Caco-2 (cell line): ENCODE measurements at regions of chr17 and their contacts with region 1.

Region 1: DNA sequence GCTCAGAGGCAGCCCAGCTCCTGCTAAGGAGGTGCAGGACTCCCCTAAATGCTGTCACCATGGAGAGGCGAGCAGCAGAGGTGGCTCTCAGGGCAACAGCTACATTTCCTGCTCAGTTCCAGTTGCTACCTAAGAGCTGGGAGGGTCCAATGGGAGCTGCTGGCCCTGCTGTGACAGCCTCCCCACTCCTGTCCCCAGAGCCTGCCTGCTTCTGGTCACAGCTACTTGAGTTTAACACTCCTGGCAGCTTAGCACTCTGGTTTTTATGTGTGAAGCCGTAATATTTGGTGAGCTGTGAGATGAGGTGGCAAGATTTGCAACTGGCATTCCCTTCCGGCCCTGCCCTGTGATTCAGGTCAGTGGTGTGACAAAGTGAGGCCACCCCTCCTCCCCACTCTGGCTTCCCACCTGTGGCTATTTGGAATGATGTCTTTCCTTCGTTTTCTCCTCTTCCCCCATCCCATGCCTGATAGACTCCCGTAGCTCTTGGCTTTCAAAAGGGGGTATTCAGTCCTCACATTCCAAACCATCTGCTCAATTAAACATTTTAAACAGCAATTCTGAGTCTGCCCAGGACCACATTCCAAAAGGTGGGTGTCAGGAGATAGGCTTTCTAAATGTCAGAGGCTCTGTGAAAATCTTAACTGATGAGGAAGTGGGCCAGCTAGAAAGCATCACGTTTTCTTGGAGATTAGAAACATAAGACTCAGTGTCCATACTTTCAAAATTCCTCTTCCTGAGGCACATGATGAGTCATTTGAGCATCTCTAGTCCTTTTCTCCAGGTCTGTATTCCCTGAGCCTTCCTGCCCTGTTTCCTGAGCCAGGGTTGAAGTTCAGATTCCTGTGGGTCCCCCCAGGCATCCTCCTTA is 42.6 kb upstream of the SKAP1 start:
- DNase-seq: no peak
- H3K4me3 ChIP-seq: no peak overlapping the region
- H3K4me3 Mint-ChIP-seq: no peak overlapping the region
- H3K27ac Mint-ChIP-seq: no peak overlapping the region
- H3K4me1 ChIP-seq: peaks cover 17% of the 10 kb centered on the region
- H3K4me1 Mint-ChIP-seq: peaks cover 4% of the 10 kb centered on the region
- H3K27me3 ChIP-seq: no peaks in the 10 kb centered on the region
- H3K27me3 Mint-ChIP-seq: peaks cover 6% of the 10 kb centered on the region
- CTCF ChIP-seq: no peak

Region 2: DNA sequence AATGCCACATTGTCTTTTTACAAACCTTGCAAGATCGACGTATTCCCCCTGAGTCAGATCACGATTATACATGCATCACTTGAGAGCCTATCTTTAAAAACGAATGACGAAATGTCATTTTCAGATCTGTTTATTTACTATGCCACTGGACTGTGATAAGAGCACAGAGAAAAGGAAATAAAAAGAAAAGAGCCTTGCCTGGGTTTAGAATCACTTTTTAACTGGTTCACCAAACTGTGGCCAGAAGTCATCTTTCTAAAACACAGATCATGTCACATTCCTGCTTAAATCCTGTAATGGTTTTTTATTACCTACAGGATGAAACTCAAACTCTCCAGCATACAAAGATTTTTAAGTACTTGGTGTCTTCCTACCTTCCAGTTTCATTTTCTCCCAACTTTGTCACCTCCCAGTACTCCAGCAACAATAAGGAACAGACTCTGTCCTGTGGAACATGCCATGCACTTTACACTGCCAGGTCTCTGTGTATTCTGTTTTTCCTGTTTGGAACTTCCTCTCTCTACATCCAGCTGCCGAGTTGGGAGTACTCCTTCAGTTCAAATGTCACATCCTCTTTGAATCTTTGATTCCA is 273.6 kb before region 1 on chr17:
- CTCF ChIA-PET with region 1: no interaction called
- POLR2A ChIA-PET with region 1: no interaction called
- intact Hi-C with region 1: loop called (anchors 5 kb)
- DNase-seq: no peak
- H3K4me3 ChIP-seq: no peak overlapping the region
- H3K4me3 Mint-ChIP-seq: peak overlapping the region; percentile 0
- H3K27ac Mint-ChIP-seq: no peak overlapping the region
- H3K4me1 ChIP-seq: peaks cover 17% of the 10 kb centered on the region
- H3K4me1 Mint-ChIP-seq: peaks cover 21% of the 10 kb centered on the region
- H3K27me3 ChIP-seq: no peaks in the 10 kb centered on the region
- H3K27me3 Mint-ChIP-seq: no peaks in the 10 kb centered on the region
- CTCF ChIP-seq: no peak